Endothelial cell of umbilical vein (primary cell): ENCODE measurements at regions of chr16 and their contacts with region 1.

Region 1: DNA sequence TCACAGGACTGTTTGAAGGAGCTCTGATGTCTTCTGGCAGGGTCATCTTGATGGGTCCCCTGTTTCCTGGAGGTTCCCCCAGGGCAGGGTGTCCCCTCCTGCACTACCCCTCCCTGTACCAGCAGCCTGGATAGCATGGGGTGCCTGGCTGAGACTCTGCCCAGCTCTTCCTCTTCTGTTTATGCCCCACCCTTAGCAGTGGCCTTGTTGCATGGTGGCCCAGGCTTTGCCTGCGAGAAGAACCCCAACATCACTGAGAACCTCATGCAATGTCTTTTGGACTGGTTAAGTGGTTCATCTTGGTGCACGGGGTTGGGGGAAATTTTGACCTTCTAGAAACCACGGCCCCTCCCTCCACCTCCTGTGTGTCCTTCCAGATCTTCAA is 121.8 kb downstream of the IRX3 start:
- DNase-seq: no peak
- H3K4me3 ChIP-seq: no peak overlapping the region
- H3K27ac ChIP-seq: no peak overlapping the region
- H3K4me1 ChIP-seq: no peaks in the 10 kb centered on the region
- H3K27me3 ChIP-seq: no peaks in the 10 kb centered on the region
- CTCF ChIP-seq: no peak
- POLR2A ChIP-seq: no peak

Region 2: DNA sequence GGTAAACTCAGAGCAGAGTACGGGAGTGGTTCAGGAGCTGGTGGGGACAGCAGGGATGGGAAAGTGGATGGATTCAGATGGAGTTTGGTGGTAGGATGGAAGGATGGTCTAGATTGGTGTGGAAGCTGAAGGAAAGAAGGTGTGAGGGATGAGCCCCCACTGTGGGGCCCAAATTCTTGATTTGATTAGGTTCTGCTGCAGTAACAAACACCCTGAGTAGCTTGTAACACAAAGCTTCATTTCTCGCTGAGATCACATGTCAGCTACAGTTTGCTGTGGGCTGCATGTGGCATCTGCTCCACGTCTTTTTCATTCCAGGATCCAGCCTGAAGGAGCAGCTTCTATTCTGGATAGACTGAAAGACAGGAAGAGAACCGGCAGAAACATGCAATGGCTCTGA is 22.0 kb before region 1 on chr16:
- CTCF ChIA-PET with region 1: no interaction called
- POLR2A ChIA-PET with region 1: no interaction called
- dilution Hi-C with region 1: no loop called
- intact Hi-C with region 1: loop called (anchors 1 kb)
- DNase-seq: no peak
- H3K4me3 ChIP-seq: no peak overlapping the region
- H3K27ac ChIP-seq: no peak overlapping the region
- H3K4me1 ChIP-seq: no peaks in the 10 kb centered on the region
- H3K27me3 ChIP-seq: no peaks in the 10 kb centered on the region
- CTCF ChIP-seq: no peak
- POLR2A ChIP-seq: no peak

Region 3: DNA sequence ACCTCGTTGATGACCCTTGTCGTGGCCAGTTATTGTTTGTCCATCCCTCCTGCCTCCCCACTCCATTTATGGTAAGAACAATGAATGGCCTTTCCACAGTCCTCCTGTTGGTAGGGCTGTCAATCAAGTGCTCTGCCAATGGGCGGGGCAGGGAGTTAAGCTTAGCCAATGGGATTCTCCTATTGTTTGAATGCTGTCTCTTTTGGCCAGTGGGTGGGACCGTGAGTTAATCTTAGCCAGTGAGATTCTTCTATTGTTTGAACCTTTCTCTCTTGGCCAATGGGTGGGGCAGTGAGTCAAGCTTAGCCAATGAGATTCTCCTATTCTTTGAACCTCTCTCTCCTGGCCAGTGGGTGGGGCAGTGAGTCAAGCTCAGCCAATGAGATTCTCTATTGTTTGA is 36.4 kb after region 1 on chr16:
- CTCF ChIA-PET with region 1: no interaction called
- POLR2A ChIA-PET with region 1: no interaction called
- dilution Hi-C with region 1: no loop called
- intact Hi-C with region 1: no loop called
- DNase-seq: no peak
- H3K4me3 ChIP-seq: no peak overlapping the region
- H3K27ac ChIP-seq: no peak overlapping the region
- H3K4me1 ChIP-seq: no peaks in the 10 kb centered on the region
- H3K27me3 ChIP-seq: no peaks in the 10 kb centered on the region
- CTCF ChIP-seq: no peak
- POLR2A ChIP-seq: no peak